ENCODE measurements at regions of chr7 and their contacts with region 1.

Region 1: DNA sequence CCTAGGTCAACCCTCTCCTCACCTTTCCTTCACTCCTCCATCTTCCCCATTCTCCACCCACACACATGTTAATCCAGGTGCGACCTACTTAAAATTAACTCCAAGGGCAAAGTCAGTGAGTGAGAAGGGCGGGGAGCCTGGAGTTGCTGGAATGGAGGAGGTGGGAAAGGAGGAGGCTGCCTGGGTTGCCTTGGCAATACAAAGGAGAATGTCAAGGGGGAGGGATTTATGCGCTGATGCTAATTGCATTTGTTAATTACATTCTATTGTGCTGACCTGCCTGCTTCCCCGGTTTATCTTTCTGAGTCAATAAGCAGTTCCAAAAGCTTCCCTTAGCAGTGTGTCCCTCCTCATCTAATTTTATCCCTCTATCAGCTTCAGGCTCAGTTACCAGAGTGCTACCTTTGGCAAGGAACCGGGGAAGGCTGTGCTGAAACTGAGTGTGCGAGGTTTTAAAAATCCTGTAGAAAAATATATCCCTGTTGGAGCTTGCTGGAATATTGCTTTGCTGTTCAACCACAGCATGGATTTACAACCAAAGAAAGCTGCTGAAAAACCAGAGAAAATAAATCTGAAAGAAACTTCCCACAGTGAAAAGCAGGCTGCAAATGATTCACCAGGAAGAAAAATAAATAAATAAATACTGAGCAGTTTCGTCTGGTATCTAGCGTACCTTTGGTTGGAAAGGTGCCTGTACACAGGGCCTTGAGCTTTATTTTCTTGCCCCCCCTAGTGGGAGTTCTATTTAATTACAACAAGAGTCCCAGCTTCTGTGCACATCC is 113.2 kb upstream of the DGKB start:
- DNase-seq: no peak
- H3K4me3 ChIP-seq: peak overlapping the region; percentile 26 to 45 (median 34)
- H3K27ac ChIP-seq: no peak overlapping the region
- H3K4me1 ChIP-seq: peaks cover 0 to 11% (median 8%) of the 10 kb centered on the region in 4 donors
- H3K27me3 ChIP-seq: no peaks in the 10 kb centered on the region
- CTCF ChIP-seq: peak; percentile 63 to 71 (median 71)
- EP300 ChIP-seq: no peak
- POLR2A ChIP-seq: no peak

Region 2: GRCh38 chr7:14717816-14718215 is 297.9 kb before region 1 on chr7:
- intact Hi-C with region 1: loop called (anchors 2 kb)
- DNase-seq: no peak
- H3K4me3 ChIP-seq: no peak overlapping the region
- H3K27ac ChIP-seq: no peak overlapping the region
- H3K4me1 ChIP-seq: peaks cover 0 to 4% (median 1%) of the 10 kb centered on the region in 4 donors
- H3K27me3 ChIP-seq: no peaks in the 10 kb centered on the region
- CTCF ChIP-seq: peak; percentile 61 to 65 (median 63)
- EP300 ChIP-seq: no peak
- POLR2A ChIP-seq: no peak

Measured in esophagus muscularis mucosa (tissue), 4 donors.